ENCODE measurements at regions of chr1 and their contacts with region 1.

Region 1: GRCh38 chr1:148372731-148373130 is 110.4 kb downstream of the PPIAL4G start:
- DNase-seq: no peak
- H3K4me3 ChIP-seq: no peak overlapping the region
- H3K27ac ChIP-seq: no peak overlapping the region
- H3K27me3 ChIP-seq: peaks cover 2% of the 10 kb centered on the region
- CTCF ChIP-seq: no peak

Region 2: GRCh38 chr1:148160343-148161052 is 212.2 kb before region 1 on chr1:
- CTCF ChIA-PET with region 1: no interaction called
- POLR2A ChIA-PET with region 1: no interaction called
- DNase-seq: no peak
- H3K4me3 ChIP-seq: no peak overlapping the region
- H3K27ac ChIP-seq: no peak overlapping the region
- H3K27me3 ChIP-seq: peaks cover 45% of the 10 kb centered on the region
- CTCF ChIP-seq: no peak

Region 3: DNA sequence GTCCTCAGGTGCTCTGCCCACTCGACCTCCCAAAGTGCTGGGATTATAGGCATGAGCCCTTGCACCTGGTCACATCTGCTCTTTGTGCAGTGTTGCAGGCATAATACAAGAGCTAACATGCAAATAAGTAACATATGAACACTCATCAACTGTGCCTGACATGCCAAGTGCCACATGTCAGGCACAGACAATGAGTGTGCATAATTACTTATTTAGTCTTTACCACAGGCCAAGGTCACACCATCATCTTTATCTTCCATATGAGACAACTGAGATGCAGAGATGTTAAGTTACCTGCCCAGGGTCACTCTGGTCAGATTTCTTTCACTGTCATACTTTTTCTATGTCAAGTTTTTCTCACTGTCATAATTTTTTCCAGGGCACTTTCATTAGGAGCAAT is 15.7 kb before region 1 on chr1:
- CTCF ChIA-PET with region 1: interaction called, 15 read pairs
- POLR2A ChIA-PET with region 1: interaction called, 6 read pairs
- DNase-seq: no peak
- H3K4me3 ChIP-seq: no peak overlapping the region
- H3K27ac ChIP-seq: no peak overlapping the region
- H3K27me3 ChIP-seq: peaks cover 44% of the 10 kb centered on the region
- CTCF ChIP-seq: no peak

Measured in AG04450 (cell line).